ENCODE measurements at regions of chrX and their contacts with region 1.

Region 1: GRCh38 chrX:154534862-154535670 is 11.6 kb downstream of the G6PD start:
- DNase-seq: peak; percentile 89 to 93 (median 91)
- H3K4me3 ChIP-seq: no peak overlapping the region
- H3K27ac ChIP-seq: peak overlapping the region in 2 of 5 donors; percentile 27 to 56
- H3K4me1 ChIP-seq: peaks cover 0 to 8% of the 10 kb centered on the region in 2 donors
- H3K27me3 ChIP-seq: no peaks in the 10 kb centered on the region
- CTCF ChIP-seq: peak; percentile 99 to 100 (median 100)
- POLR2A ChIP-seq: peak in 1 of 2 donors; percentile 8

Region 2: DNA sequence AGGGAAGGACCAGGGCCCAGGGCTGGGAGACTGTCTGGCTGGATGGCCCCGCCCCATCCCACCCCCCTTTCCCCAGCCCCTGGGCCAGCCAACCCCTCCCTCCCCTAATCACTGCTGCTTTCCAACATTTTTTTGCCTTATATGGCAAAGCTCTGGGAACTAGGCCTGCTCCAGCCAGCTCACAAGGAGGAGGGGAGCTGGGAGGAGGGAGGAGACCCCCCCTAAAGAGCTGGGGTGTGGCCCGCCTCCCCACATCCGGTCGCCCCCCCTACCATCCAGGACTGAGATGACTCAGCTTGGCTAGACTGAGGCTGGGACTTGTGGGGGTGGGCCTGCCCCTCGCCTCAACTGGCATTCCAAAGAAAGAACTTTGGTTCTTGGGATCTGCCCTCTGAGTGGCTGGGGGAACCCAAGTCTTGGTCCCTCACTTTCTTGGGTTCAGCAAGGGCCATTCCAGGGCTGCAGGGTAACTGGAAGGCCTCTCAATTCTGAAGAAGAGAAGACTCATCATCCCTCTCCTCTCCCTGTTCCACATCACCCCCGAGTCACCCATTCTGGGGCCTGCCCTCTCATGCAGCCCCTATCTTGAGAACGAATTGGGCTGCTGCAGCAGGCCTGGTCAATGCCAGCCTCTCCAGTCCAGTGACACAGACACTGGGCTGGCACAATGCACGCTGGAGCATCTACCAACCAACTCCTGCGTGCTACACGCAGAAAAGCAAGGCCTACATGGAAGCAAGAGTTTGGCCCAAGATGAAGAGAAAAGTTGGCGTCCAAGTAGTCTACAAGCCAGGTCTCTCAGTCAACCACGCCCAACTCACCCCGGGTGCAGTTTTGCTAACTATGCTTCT is 165.4 kb before region 1 on chrX:
- intact Hi-C with region 1: no loop called
- DNase-seq: peak; percentile 58 to 90 (median 82)
- H3K4me3 ChIP-seq: peak overlapping the region in 3 of 4 donors; percentile 24 to 64 (median 29)
- H3K27ac ChIP-seq: peak overlapping the region; percentile 46 to 98 (median 89)
- H3K4me1 ChIP-seq: peaks cover 6 to 8% of the 10 kb centered on the region in 2 donors
- H3K27me3 ChIP-seq: no peaks in the 10 kb centered on the region
- CTCF ChIP-seq: no peak
- POLR2A ChIP-seq: peak in 1 of 2 donors; percentile 12

Region 3: DNA sequence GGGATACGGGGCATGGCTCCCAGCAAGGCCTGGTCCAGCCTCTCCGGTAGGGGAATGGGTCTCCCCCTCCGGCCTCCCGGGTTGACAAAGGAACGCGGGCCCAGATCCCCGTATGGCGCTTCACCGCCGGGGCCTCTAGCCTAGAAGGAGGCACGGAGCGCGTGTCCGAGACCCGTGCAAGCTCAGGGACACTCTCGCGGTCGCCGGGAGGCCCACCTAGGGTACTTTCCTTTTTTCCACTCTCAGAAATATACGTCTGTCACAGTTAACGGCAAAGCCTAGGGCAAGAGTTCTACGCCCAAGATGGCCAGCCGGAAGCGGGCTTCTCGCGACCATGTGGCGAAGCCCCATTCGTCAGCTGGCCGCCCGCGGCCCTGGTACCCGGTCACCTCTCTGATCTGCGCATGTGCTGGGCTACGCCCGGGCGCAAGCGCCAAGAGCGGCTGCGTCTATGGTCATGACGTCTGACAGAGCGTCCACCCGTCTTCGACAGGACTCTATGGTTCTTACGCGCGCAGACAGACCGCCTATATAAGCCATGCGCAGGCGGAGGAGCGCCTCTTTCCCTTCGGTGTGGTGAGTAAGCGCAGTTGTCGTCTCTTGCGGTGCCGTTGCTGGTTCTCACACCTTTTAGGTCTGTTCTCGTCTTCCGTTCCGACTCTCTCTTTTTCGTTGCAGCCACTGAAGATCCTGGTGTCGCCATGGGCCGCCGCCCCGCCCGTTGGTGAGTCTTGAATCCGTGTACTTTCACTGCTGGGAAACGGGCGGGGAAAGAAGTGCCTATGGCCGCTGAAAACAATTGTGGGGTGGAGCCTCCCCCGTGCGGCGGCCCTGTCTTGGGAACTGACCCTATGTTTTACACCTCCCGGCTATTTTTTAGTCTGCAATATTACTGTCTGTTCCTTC is 137.0 kb before region 1 on chrX and contains the start of gene RPL10:
- intact Hi-C with region 1: loop called in 1 of 2 experiments (anchors 5 kb)
- DNase-seq: peak; percentile 93 to 98 (median 95)
- H3K4me3 ChIP-seq: peak within 1 kb of the TSS; percentile 42 to 86 (median 62)
- H3K27ac ChIP-seq: peak within 1 kb of the TSS; percentile 88 to 99 (median 98)
- H3K4me1 ChIP-seq: peaks cover 0 to 8% of the 10 kb centered on the region in 2 donors
- H3K27me3 ChIP-seq: no peaks in the 10 kb centered on the region
- CTCF ChIP-seq: no peak
- POLR2A ChIP-seq: peak; percentile 93 to 94
- total RNA-seq, gene RPL10: 626 to 5,287 (median 2,456) TPM

Measured in adrenal gland (tissue), 19 donors.